Esophagus muscularis mucosa (tissue), 4 donors: ENCODE measurements at regions of chr2 and their contacts with region 1.

Region 1: DNA sequence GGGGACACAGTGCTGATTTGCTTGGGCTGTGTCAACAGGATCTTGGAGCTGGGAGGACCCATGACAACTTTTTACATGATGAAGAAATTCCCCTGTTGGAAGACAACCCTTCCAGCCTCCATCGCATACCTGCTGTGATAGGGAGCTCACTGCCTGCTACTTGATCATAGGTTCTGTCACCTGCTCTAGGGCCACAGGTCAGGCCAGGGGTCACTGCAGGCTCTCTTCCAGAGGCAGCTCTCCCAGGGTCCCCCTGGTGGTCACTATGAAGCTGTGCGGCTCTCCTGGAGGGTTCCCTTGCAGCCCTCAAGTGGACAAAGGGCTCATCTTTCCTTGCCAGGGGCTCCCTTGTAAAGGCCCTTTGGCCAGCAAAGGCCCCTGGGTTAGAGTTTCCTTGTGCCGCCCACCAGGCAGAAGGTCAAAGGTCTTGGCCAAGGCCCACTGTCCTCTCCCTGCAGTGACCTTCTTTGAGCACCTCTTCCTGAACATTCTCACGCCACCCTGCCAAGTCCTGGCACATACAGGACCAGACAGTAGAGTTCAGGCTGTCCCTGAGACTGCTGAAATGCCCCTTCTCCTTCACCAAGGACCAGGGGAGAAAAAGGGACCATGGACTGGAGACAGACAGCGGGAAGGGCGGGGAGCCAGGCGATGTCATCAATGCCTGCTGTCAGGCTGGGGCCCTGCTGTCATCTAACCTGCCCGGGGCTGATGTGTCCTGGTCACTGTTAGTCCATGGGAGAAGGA is 345.1 kb downstream of the DYSF start:
- DNase-seq: no peak
- H3K4me3 ChIP-seq: no peak overlapping the region
- H3K27ac ChIP-seq: no peak overlapping the region
- H3K4me1 ChIP-seq: peaks cover 0 to 5% (median 2%) of the 10 kb centered on the region in 4 donors
- H3K27me3 ChIP-seq: no peaks in the 10 kb centered on the region
- CTCF ChIP-seq: peak; percentile 57 to 70 (median 58)
- EP300 ChIP-seq: no peak
- POLR2A ChIP-seq: no peak

Region 2: GRCh38 chr2:71545572-71546274 is 252.7 kb before region 1 on chr2:
- intact Hi-C with region 1: loop called (anchors 5 kb)
- DNase-seq: no peak
- H3K4me3 ChIP-seq: peak overlapping the region in 2 of 4 donors; percentile 23 to 32
- H3K27ac ChIP-seq: peak overlapping the region in 3 of 4 donors; percentile 26 to 55 (median 50)
- H3K4me1 ChIP-seq: peaks cover 3 to 13% (median 10%) of the 10 kb centered on the region in 4 donors
- H3K27me3 ChIP-seq: no peaks in the 10 kb centered on the region
- CTCF ChIP-seq: peak; percentile 55 to 67 (median 57)
- EP300 ChIP-seq: no peak
- POLR2A ChIP-seq: no peak

Region 3: DNA sequence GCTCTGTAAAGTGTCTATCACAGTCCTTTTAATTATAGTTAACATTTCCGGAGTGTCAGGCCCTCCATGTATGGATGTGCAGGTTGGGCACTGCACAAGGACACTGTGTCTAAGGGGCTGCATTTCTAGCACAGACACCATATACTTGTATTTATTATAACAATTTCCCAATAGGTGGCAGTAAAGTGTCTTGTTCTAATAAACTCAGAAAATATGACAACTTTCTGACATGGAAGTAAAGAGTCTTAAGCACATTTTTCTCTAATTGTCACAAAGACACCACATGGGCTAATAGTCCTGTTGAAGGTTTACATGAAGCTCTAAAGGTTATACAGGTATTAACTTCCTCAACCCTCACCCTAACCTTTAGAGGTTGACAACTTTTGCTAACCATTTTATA is 188.5 kb before region 1 on chr2:
- intact Hi-C with region 1: loop called (anchors 5 kb)
- DNase-seq: no peak
- H3K4me3 ChIP-seq: no peak overlapping the region
- H3K27ac ChIP-seq: no peak overlapping the region
- H3K4me1 ChIP-seq: peaks cover 17 to 24% (median 21%) of the 10 kb centered on the region in 4 donors
- H3K27me3 ChIP-seq: no peaks in the 10 kb centered on the region
- CTCF ChIP-seq: peak in 2 of 3 experiments; percentile 31 to 33
- EP300 ChIP-seq: no peak
- POLR2A ChIP-seq: no peak

Region 4: DNA sequence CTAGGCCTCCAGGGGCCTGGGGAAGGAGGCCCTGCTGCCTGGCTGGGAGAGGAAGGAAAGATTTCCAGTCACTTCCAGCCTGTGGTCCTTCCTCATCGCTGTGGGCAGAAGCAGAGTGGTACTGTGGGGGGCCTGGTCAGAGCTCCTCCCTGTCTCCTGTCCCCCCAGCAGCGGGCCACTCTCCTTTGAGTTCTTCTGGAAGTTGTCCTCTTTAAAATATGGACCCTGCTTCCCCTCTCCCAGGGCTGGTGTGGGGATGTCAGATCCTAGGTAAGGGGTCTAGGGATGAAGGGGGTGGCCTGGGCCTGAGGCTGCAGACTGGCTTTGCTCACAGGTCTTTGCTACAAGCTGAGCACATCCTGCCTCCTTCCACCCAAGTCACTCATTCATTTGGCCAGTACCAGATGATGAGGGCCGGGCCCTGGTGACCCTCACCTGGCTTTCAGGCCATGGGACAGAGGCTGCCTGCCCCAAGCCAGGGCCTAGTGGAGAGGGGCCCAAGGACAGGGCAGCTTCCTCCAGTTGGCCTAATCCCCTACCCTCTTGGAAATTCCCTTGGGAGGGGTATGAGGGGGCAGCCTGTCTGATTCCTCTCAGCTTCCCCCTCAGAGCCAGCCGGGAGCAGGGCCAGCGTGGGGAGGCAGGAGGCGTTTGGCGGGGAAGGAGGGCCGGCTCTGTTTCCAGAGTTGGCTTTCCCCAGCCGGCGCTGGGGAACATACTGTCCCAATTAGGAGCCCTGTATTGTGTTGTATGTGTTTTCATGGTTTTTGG is 113.2 kb before region 1 on chr2:
- intact Hi-C with region 1: no loop called
- DNase-seq: no peak
- H3K4me3 ChIP-seq: no peak overlapping the region
- H3K27ac ChIP-seq: no peak overlapping the region
- H3K4me1 ChIP-seq: no peaks in the 10 kb centered on the region
- H3K27me3 ChIP-seq: no peaks in the 10 kb centered on the region
- CTCF ChIP-seq: no peak
- EP300 ChIP-seq: no peak
- POLR2A ChIP-seq: no peak

Region 5: GRCh38 chr2:71995067-71995665 is 196.7 kb after region 1 on chr2:
- intact Hi-C with region 1: loop called (anchors 10 kb)
- DNase-seq: no peak
- H3K4me3 ChIP-seq: no peak overlapping the region
- H3K27ac ChIP-seq: no peak overlapping the region
- H3K4me1 ChIP-seq: no peaks in the 10 kb centered on the region
- H3K27me3 ChIP-seq: peaks cover 0 to 3% (median under 1%) of the 10 kb centered on the region in 4 donors
- CTCF ChIP-seq: peak in 2 of 3 experiments; percentile 16 to 23
- EP300 ChIP-seq: no peak
- POLR2A ChIP-seq: no peak

Region 6: DNA sequence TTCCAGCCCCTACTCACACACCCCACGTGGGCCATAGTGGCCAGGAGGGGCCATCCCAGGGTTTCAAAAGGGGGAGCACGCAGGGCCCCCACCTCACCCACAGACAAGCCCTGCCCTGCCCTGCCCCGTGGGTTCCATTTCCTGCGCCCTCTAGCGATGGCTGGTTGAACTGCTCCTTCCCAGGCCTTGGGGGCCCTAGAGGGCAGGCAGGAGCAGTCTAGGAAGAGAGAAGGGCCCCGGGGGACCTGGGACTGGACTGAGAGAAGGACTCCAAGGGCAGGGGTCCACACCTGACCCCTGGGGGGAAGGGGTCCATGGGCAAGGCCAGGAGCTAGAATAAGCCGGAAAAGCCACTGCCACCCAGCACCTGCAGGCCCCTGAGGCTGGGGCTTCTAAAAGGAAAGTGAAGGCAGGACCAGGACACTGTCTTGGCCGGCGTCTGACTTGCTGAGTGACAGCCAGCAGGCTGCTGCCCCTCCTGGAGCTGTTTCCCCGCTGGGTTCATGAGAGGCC is 339.1 kb after region 1 on chr2:
- intact Hi-C with region 1: loop called (anchors 5 kb)
- DNase-seq: no peak
- H3K4me3 ChIP-seq: no peak overlapping the region
- H3K27ac ChIP-seq: no peak overlapping the region
- H3K4me1 ChIP-seq: peaks cover 17 to 27% (median 23%) of the 10 kb centered on the region in 4 donors
- H3K27me3 ChIP-seq: peaks cover 0 to 8% (median 0%) of the 10 kb centered on the region in 4 donors
- CTCF ChIP-seq: peak; percentile 66 to 92 (median 67)
- EP300 ChIP-seq: no peak
- POLR2A ChIP-seq: no peak